ENCODE measurements at regions of chr6 and their contacts with region 1.

Region 1: GRCh38 chr6:4008324-4009047 is 70.5 kb downstream of the FAM217A start:
- DNase-seq: peak in 8 of 35 experiments; percentile 10 to 73 (median 16)
- ATAC-seq: peak in 3 of 4 experiments; percentile 53 to 77 (median 59)
- H3K4me3 ChIP-seq: no peak overlapping the region
- H3K4me3 Mint-ChIP-seq: no peak overlapping the region
- H3K27ac ChIP-seq: no peak overlapping the region
- H3K27ac Mint-ChIP-seq: peak overlapping the region in 1 of 2 donors; percentile 67
- H3K4me1 ChIP-seq: peaks cover 11 to 30% of the 10 kb centered on the region in 2 experiments
- H3K4me1 Mint-ChIP-seq: peaks cover 55 to 59% (median 56%) of the 10 kb centered on the region in 3 donors
- H3K27me3 ChIP-seq: no peaks in the 10 kb centered on the region
- H3K27me3 Mint-ChIP-seq: no peaks in the 10 kb centered on the region

Region 2: GRCh38 chr6:3627956-3628835 is 380.3 kb before region 1 on chr6:
- CTCF ChIA-PET with region 1: no interaction called
- POLR2A ChIA-PET with region 1: interaction called in 1 of 2 experiments, 19 read pairs
- DNase-seq: peak in 14 of 35 experiments; percentile 4 to 35 (median 13)
- ATAC-seq: peak; percentile 65 to 79 (median 70)
- H3K4me3 ChIP-seq: peak overlapping the region in 1 of 2 donors; percentile 38
- H3K4me3 Mint-ChIP-seq: peak overlapping the region in 1 of 3 donors; percentile 6
- H3K27ac ChIP-seq: no peak overlapping the region
- H3K27ac Mint-ChIP-seq: peak overlapping the region in 1 of 2 donors; percentile 39
- H3K4me1 ChIP-seq: peaks cover 14 to 16% of the 10 kb centered on the region in 2 experiments
- H3K4me1 Mint-ChIP-seq: peaks cover 5 to 24% (median 21%) of the 10 kb centered on the region in 3 donors
- H3K27me3 ChIP-seq: peaks cover 0 to 48% of the 10 kb centered on the region in 2 experiments
- H3K27me3 Mint-ChIP-seq: peaks cover 18 to 32% of the 10 kb centered on the region in 2 donors

Region 3: DNA sequence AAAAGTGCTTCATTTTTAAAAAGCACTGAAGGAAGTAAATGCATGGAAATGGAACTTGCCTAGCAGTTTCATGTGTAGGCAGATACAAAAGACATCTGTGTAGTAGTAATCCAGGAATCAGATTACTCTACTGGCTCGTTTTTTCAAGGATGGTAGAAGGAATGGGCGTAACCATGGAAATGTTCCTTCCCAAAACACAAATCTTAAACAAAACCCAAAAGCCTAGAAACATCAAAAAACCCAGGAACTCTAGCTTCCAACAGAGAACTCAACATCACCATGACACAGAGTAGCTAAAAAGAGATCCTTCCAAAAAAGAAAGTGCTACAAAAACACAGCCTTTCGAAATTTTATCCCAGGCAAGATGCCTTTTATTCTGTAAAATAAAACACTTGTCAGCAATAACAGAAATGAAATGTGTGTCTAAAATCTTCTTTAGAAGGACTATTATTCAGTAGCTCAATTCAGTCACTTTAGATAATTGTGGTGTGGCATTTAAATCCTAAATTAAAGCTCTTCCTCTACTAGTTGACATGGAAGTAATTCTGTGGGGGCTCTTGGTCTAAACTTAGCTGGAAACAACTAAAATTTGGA is 11.2 kb before region 1 on chr6:
- CTCF ChIA-PET with region 1: interaction called, 4 to 5 read pairs
- POLR2A ChIA-PET with region 1: interaction called in 1 of 2 experiments, 12 read pairs
- DNase-seq: no peak
- ATAC-seq: no peak
- H3K4me3 ChIP-seq: no peak overlapping the region
- H3K4me3 Mint-ChIP-seq: no peak overlapping the region
- H3K27ac ChIP-seq: no peak overlapping the region
- H3K27ac Mint-ChIP-seq: no peak overlapping the region
- H3K4me1 ChIP-seq: peaks cover 0 to 2% of the 10 kb centered on the region in 2 experiments
- H3K4me1 Mint-ChIP-seq: peaks cover 25 to 43% (median 30%) of the 10 kb centered on the region in 3 donors
- H3K27me3 ChIP-seq: no peaks in the 10 kb centered on the region
- H3K27me3 Mint-ChIP-seq: no peaks in the 10 kb centered on the region

Measured in T-cell (primary cell).